ENCODE measurements at regions of chr4 and their contacts with region 1.

Region 1: GRCh38 chr4:78644744-78645330 is 93.3 kb downstream of the ANXA3 start:
- DNase-seq: peak; percentile 42 to 57
- ATAC-seq: peak; percentile 75 to 87 (median 82)
- H3K4me3 ChIP-seq: no peak overlapping the region
- H3K27ac ChIP-seq: peak overlapping the region; percentile 82
- H3K4me1 ChIP-seq: peaks cover 13% of the 10 kb centered on the region
- H3K27me3 ChIP-seq: no peaks in the 10 kb centered on the region
- CTCF ChIP-seq: peak; percentile 86

Region 2: GRCh38 chr4:78569291-78569821 is 75.5 kb before region 1 on chr4:
- intact Hi-C with region 1: no loop called
- DNase-seq: no peak
- ATAC-seq: peak in 1 of 4 donors; percentile 54
- H3K4me3 ChIP-seq: no peak overlapping the region
- H3K27ac ChIP-seq: peak overlapping the region; percentile 10
- H3K4me1 ChIP-seq: no peaks in the 10 kb centered on the region
- H3K27me3 ChIP-seq: no peaks in the 10 kb centered on the region
- CTCF ChIP-seq: no peak

Region 3: GRCh38 chr4:78775303-78776030 is 130.6 kb after region 1 on chr4:
- intact Hi-C with region 1: loop called (anchors 5 kb)
- DNase-seq: peak; percentile 89 to 94
- ATAC-seq: peak; percentile 92 to 95 (median 94)
- H3K4me3 ChIP-seq: peak overlapping the region; percentile 90
- H3K27ac ChIP-seq: peak overlapping the region; percentile 99
- H3K4me1 ChIP-seq: peaks cover 32% of the 10 kb centered on the region
- H3K27me3 ChIP-seq: no peaks in the 10 kb centered on the region
- CTCF ChIP-seq: no peak

Region 4: DNA sequence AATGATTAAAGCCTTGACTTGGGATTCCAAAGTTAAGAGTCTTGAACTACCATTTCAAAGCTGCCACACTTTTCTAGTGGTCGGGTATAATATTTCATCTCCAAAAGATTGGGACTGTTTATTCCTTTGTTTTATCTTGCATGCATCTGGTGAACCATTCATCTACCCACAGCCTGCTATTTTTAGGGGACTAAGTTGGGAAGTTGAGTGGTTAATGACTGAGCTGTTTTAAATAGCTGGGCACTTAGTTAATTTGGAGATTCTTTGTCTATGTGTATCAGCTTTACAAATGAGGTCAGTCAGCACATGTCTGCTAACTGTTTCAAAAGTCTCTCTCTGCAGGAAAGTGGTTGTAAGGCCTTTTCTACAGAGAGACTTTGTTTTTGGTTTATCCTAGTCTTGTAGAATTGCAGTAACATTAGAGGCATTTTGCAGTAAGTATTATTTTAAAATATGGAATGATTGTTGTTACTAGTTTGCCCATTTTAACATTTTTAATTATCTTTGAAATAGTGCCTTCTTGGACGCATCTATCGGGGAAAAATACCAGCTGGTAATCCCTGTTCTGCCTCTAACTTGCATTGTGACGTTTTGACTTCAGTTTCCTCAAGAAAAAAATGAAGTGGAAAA is 139.5 kb after region 1 on chr4:
- intact Hi-C with region 1: loop called (anchors 5 kb)
- DNase-seq: no peak
- ATAC-seq: peak; percentile 80 to 89 (median 83)
- H3K4me3 ChIP-seq: peak overlapping the region; percentile 3
- H3K27ac ChIP-seq: peak overlapping the region; percentile 58
- H3K4me1 ChIP-seq: peaks cover 61% of the 10 kb centered on the region
- H3K27me3 ChIP-seq: no peaks in the 10 kb centered on the region
- CTCF ChIP-seq: no peak